GM10248 (cell line): ENCODE measurements at regions of chr19 and their contacts with region 1.

Region 1: GRCh38 chr19:39406656-39407393 is at the start of gene ZFP36:
- DNase-seq: peak; percentile 79
- CTCF ChIP-seq: no peak

Region 2: DNA sequence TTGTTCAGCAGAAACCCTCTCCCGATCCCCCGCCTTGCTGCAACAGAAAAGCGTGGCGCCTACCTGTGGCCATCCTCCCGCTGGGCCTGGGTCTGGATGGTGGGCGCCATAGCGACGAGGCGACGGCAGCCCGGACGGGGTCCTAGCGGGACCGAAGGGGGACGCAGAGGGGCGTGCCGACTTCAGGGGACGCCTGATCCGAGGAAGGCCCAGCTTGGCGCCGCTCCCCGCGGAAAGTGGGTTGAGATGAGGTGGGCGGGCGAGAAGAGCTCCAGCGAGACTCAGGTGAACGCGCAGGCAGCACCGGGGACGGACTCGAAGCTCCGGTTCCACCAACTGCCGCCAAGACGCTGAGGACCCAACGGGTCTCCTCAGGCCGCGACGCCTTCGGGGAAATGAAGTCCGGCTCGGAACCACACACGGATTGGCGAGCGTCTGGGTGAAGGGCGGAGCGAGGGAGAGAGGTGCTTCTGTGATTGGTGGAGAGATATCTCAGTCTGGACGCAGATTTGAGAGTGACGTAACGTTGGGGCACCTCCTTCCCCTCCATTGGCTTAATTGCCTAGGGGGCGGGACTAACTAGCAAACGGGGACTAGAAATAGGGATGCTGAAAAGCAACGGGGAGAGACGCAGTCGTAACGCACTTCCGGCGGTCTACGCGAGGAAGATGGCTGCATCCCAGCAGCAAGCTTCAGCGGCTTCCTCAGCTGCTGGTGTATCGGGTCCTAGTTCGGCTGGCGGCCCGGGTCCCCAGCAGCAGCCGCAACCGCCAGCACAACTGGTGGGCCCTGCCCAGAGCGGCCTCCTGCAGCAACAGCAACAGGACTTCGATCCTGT is 15.9 kb before region 1 on chr19 and contains the starts of genes MED29 and PAF1:
- CTCF ChIA-PET with region 1: interaction called, 103 read pairs
- POLR2A ChIA-PET with region 1: interaction called, 18 read pairs
- DNase-seq: peak; percentile 99
- CTCF ChIP-seq: no peak

Region 3: GRCh38 chr19:39423258-39424086 is 16.6 kb after region 1 on chr19:
- CTCF ChIA-PET with region 1: interaction called, 8 read pairs
- POLR2A ChIA-PET with region 1: interaction called, 10 read pairs
- DNase-seq: no peak
- CTCF ChIP-seq: no peak

Region 4: GRCh38 chr19:39480337-39481228 is 73.8 kb after region 1 on chr19 and contains the start of gene TIMM50:
- CTCF ChIA-PET with region 1: no interaction called
- POLR2A ChIA-PET with region 1: no interaction called
- DNase-seq: peak; percentile 95
- CTCF ChIP-seq: no peak